Ascending aorta (tissue), 2 donors: ENCODE measurements at regions of chr12 and their contacts with region 1.

Region 1: DNA sequence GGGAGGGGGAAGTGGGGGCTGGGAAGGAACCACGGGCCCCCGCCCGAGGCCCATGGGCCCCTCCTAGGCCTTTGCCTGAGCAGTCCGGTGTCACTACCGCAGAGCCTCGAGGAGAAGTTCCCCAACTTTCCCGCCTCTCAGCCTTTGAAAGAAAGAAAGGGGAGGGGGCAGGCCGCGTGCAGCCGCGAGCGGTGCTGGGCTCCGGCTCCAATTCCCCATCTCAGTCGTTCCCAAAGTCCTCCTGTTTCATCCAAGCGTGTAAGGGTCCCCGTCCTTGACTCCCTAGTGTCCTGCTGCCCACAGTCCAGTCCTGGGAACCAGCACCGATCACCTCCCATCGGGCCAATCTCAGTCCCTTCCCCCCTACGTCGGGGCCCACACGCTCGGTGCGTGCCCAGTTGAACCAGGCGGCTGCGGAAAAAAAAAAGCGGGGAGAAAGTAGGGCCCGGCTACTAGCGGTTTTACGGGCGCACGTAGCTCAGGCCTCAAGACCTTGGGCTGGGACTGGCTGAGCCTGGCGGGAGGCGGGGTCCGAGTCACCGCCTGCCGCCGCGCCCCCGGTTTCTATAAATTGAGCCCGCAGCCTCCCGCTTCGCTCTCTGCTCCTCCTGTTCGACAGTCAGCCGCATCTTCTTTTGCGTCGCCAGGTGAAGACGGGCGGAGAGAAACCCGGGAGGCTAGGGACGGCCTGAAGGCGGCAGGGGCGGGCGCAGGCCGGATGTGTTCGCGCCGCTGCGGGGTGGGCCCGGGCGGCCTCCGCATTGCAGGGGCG is at the start of gene GAPDH:
- DNase-seq: peak; percentile 52 to 94
- H3K4me3 ChIP-seq: peak within 1 kb of the TSS; percentile 79 to 98
- H3K27ac ChIP-seq: peak within 1 kb of the TSS; percentile 98 to 99
- H3K4me1 ChIP-seq: peaks cover 19 to 30% of the 10 kb centered on the region in 2 donors
- H3K27me3 ChIP-seq: no peaks in the 10 kb centered on the region
- CTCF ChIP-seq: no peak
- total RNA-seq, gene GAPDH: 3,445 TPM

Region 2: DNA sequence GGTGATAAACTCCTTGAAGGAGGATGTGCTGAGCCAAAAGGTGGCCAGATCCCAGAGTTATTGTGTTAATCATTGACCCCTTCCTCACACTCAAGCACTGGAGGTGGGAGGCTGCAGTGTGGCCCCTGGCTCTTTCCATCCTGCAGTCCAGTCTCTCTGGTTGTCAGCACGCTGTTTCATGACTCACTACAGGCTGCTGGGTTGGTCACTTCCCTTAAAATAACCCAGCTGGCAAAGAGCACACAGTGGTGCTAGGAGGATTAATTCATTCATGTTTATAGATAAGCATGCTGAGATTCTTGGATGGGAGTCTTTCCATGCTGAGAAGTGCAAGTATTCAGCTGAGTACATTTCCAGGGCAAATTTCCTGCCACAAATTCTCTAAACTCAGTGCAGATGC is 817.9 kb before region 1 on chr12:
- intact Hi-C with region 1: loop called (anchors 5 kb)
- DNase-seq: peak; percentile 14 to 74
- H3K4me3 ChIP-seq: no peak overlapping the region
- H3K27ac ChIP-seq: peak overlapping the region; percentile 40 to 57
- H3K4me1 ChIP-seq: peaks cover 0 to 14% of the 10 kb centered on the region in 2 donors
- H3K27me3 ChIP-seq: no peaks in the 10 kb centered on the region
- CTCF ChIP-seq: no peak

Region 3: GRCh38 chr12:6335451-6336078 is 198.5 kb before region 1 on chr12:
- intact Hi-C with region 1: loop called (anchors 2 kb)
- DNase-seq: peak; percentile 65 to 94
- H3K4me3 ChIP-seq: peak overlapping the region; percentile 90 to 93
- H3K27ac ChIP-seq: peak overlapping the region; percentile 97 to 98
- H3K4me1 ChIP-seq: peaks cover 24 to 52% of the 10 kb centered on the region in 2 donors
- H3K27me3 ChIP-seq: no peaks in the 10 kb centered on the region
- CTCF ChIP-seq: peak; percentile 43 to 71 (median 69)

Region 4: GRCh38 chr12:6493497-6494257 is 40.4 kb before region 1 on chr12 and contains the start of gene NCAPD2:
- intact Hi-C with region 1: loop called (anchors 1 kb)
- DNase-seq: peak; percentile 89 to 98
- H3K4me3 ChIP-seq: peak within 1 kb of the TSS; percentile 67 to 77
- H3K27ac ChIP-seq: peak within 1 kb of the TSS; percentile 79 to 98
- H3K4me1 ChIP-seq: peaks cover 8 to 18% of the 10 kb centered on the region in 2 donors
- H3K27me3 ChIP-seq: no peaks in the 10 kb centered on the region
- CTCF ChIP-seq: peak in 2 of 3 experiments; percentile 31 to 73
- total RNA-seq, gene NCAPD2: 11.7 TPM